ENCODE measurements at regions of chr9 and their contacts with region 1.

Region 1: DNA sequence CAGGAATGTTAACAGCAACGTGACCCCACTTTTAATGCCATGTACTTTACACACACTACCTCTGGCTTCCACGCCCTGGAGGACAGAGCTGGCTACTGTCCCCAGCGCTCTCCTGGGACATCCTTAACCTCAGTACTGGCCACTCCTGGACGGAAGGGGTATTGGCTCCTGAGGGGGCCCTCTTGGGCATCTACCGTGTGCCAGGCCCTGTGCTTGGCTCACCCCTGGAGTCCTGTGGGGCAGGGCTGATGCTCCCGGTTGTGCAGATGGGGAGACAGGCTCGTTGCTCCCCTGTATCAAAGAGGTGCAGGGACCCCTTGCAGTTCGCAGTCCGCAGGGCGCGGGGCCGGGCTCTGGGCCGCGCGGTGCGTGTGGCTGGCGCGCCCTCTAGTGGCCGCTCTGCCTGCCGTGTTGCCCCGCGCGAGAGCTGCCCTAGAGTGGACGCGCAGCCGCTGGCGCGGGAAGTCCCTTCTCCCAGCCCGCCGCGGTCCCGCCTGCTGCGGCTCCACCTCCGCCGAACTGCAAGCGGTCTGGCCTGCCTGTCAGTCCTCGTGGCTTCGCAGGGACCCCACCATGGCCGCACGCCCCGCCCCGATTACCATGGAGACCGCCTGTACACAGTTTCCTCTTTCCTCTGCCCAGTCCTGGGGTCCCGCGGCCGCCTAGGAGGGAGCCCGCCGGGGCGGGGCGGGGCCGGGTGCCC is at the start of gene WDR38:
- DNase-seq: no peak
- H3K4me3 ChIP-seq: peak within 1 kb of the TSS; percentile 60
- CTCF ChIP-seq: peak; percentile 89

Region 2: DNA sequence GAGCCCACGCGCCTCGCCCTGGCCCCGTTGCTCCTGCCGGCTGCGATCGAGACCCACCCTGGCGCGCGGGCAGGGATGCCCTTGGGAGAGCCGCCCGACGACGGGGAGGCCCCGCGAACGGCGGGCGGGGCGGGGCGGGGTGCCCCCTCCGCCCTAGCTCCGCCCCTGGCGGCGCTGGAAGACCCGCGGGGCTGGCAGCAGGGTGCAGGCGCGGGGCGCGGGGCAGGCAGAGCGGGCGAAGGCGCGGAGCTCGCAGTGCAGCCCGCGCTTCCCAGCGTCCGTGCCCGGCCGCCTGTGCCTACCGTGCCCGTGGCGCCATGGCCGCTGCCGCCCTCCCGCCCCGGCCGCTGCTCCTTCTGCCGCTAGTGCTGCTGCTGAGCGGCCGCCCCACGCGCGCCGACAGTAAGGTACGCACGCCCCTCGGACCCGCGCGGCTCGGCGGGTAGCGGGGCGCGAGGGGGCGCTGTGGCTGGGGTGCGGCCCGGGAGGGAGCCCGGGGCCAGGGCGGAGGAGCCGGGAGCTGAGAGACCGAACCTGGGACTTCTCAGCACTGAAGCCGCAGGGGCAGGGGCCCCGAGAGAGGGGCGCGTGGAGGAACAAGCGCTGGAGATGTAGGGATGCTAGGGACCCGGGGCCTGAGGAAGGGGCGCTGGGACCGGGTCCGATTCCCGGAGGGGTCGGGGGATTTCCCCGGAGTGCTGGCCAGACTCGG is 75.9 kb before region 1 on chr9 and contains the start of gene OLFML2A:
- CTCF ChIA-PET with region 1: interaction called, 2,098 read pairs
- POLR2A ChIA-PET with region 1: interaction called, 12 read pairs
- DNase-seq: no peak
- H3K4me3 ChIP-seq: peak within 1 kb of the TSS; percentile 58
- CTCF ChIP-seq: peak; percentile 40

Region 3: GRCh38 chr9:124794902-124795491 is 58.0 kb before region 1 on chr9:
- CTCF ChIA-PET with region 1: interaction called, 29 read pairs
- POLR2A ChIA-PET with region 1: no interaction called
- DNase-seq: no peak
- H3K4me3 ChIP-seq: no peak overlapping the region
- CTCF ChIP-seq: no peak

Region 4: GRCh38 chr9:124812401-124813016 is 40.5 kb before region 1 on chr9:
- CTCF ChIA-PET with region 1: interaction called, 38 read pairs
- POLR2A ChIA-PET with region 1: interaction called, 3 read pairs
- DNase-seq: peak; percentile 92
- H3K4me3 ChIP-seq: no peak overlapping the region
- CTCF ChIP-seq: peak; percentile 15

Region 5: DNA sequence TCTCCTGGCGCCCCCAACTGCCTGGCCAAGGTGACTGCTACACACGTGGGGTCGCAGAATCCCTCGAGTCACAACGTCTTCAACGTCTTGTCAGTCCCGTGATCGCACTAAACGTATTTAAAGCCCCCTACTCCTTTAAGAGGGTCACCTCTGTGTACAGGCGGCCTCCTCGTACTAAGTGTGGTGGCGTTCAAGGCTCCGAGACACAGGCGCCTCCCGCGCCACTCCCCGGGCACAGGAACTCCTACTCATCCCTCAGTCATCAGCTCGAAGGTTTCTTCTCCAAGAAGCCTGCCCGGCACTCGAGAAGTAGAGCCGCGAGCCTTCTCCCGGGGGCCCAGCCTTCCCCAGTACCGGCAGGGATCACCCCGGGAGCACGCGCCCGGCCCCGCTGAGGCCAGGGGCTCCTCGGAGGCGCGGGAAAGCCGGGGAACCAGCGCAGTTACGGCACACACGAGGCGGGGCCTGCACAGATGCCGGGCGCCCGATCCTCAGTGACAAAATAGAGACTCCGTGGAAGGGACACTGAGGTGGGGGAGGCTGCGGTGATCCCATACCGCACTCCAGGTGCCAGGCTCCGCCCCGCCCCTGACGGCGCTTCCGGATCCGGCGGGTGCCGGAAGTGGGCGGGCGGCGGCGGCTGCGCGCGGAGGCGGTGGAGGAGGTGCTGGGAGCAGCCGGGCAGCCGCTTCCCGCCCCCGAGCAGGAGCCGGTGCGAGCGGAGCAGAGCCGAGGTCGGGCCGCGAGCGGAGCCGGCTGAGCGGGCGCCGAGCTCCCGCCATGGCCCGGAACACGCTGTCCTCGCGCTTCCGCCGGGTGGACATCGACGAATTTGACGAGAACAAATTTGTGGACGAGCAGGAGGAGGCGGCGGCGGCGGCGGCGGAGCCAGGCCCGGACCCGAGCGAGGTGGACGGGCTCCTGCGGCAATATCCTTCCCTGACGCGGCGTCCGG is 15.8 kb after region 1 on chr9:
- CTCF ChIA-PET with region 1: interaction called, 19 read pairs
- POLR2A ChIA-PET with region 1: interaction called, 4 read pairs
- DNase-seq: no peak
- H3K4me3 ChIP-seq: peak overlapping the region; percentile 90
- CTCF ChIP-seq: peak; percentile 29

Region 6: GRCh38 chr9:124940693-124941453 is 87.9 kb after region 1 on chr9 and contains the start of gene GOLGA1:
- CTCF ChIA-PET with region 1: no interaction called
- POLR2A ChIA-PET with region 1: no interaction called
- DNase-seq: no peak
- H3K4me3 ChIP-seq: peak within 1 kb of the TSS; percentile 77
- CTCF ChIP-seq: no peak

Region 7: GRCh38 chr9:125374443-125375309 is 521.7 kb after region 1 on chr9:
- CTCF ChIA-PET with region 1: interaction called, 18 read pairs
- POLR2A ChIA-PET with region 1: no interaction called
- DNase-seq: no peak
- H3K4me3 ChIP-seq: peak overlapping the region; percentile 50
- CTCF ChIP-seq: peak; percentile 84

Measured in AG04449 (cell line).